ENCODE measurements at regions of chr10 and their contacts with region 1.

Region 1: DNA sequence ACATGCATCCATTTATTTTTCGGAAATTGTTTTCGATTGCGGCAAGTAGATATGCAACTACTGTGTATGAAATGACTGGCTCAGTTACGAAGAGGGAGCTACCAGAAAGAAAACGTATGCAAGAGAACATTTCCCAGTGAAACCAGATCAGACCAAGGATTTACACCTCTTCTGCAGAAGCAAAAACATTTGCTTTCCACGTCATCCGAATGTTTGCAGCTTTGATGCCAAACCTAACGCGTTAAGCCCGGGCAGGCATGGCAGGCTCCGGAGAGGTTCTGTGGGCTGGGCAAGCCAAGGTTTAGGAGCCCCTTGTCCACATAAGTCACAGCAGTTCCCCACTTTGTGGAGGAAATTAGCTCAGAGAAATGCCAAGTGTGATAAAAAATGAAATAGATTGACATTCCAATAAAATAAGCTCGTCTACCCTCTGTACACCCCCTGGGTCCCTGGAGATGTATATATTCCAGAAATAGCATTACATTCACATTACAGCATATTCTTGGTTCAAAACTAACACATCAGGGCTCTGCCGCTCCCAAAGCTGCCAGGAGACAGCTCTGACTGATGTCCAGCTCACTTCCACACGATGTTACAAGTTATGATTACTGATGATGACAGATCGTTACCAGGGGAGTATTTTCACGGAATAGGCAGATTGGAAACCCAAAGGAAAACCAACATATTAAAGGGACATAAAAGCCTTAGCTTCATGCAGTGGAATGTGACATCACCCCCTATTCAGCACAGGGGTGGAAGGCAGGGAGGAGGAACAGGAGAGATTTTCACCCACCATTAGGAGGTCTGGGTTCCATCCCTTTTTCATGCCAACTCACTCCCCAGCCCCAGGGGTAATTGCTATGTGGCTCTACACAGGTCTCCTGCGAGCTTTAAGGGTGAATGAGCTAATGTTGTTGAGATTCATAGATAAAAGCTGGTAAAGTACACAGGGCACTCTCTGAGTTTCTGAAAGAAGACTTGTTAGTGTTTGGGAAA is 81.5 kb downstream of the LYZL1 start:
- DNase-seq: peak; percentile 73
- H3K4me3 ChIP-seq: no peak overlapping the region
- H3K27ac ChIP-seq: no peak overlapping the region
- H3K4me1 ChIP-seq: peaks cover 0 to 7% of the 10 kb centered on the region in 2 experiments; a peak in 2 of 4 replicates
- H3K27me3 ChIP-seq: peaks cover 34% of the 10 kb centered on the region
- CTCF ChIP-seq: no peak
- EP300 ChIP-seq: no peak
- RAD21 ChIP-seq: no peak

Region 2: DNA sequence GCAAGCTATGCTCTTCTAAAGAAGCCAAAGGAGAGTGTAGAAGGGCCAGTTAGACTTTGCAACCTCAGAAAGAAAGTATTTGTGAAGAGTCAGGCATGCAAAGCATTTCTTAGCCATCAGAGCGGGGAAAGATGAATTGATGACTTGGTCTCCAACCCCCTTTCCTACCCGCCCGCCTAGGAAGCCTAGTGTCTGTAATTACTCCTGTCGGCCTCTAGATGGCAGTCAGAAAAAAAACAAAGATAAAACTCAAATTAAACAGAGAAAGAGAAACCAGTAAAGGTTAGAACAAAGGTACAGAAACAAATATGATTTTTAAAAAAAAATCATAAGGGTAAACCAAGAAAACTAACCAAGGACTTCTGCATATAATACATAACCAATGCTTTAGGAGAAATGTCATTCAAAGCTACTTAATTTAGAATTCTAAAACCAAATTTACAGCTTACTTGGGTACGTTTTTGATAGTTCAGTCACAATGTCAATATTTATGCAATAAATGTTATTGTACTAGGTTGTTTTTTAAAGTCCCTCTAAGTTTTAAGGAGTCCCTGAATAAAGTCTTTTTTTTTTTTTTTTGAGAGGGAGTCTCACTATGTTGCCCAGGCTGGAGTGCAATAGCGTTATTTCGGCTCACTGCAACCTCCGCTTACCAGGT is 16.1 kb after region 1 on chr10:
- CTCF ChIA-PET with region 1: interaction called, 28 read pairs
- POLR2A ChIA-PET with region 1: no interaction called
- DNase-seq: peak; percentile 56
- H3K4me3 ChIP-seq: peak overlapping the region in 1 of 2 experiments; percentile 18; a peak in 1 of 4 replicates
- H3K27ac ChIP-seq: no peak overlapping the region
- H3K4me1 ChIP-seq: no peaks in the 10 kb centered on the region; a peak in 1 of 4 replicates
- H3K27me3 ChIP-seq: peaks cover 9% of the 10 kb centered on the region
- CTCF ChIP-seq: peak; percentile 82
- EP300 ChIP-seq: no peak
- RAD21 ChIP-seq: peak; percentile 57